ENCODE measurements at regions of chrX and their contacts with region 1.

Region 1: DNA sequence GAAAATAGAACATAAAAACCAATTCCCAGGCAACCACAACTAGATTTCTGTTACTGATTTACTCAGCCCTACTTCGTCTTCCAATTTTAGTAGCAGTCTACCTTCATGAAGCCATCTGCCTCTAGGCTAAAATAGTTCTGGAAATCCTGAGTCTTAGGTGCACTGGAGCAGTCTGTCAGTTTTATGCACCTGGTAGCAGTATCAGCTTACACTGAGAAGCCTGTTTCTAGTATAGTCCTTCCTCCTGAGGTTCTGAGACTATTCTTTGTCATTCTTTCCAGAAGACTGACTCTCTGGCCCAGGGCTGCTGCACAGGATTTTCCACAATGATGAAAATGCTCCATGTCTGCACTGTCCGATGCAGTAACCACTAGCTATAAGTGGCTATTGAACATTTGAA is 16.9 kb upstream of the HPRT1 start:
- DNase-seq: no peak
- ATAC-seq: no peak
- H3K4me3 ChIP-seq: no peak overlapping the region
- H3K4me3 Mint-ChIP-seq: no peak overlapping the region
- H3K27ac ChIP-seq: no peak overlapping the region
- H3K27ac Mint-ChIP-seq: no peak overlapping the region
- H3K4me1 ChIP-seq: no peaks in the 10 kb centered on the region
- H3K4me1 Mint-ChIP-seq: no peaks in the 10 kb centered on the region
- H3K27me3 ChIP-seq: no peaks in the 10 kb centered on the region
- H3K27me3 Mint-ChIP-seq: peaks cover 0 to 3% of the 10 kb centered on the region in 2 donors

Region 2: GRCh38 chrX:134419784-134420183 is 23.2 kb before region 1 on chrX:
- CTCF ChIA-PET with region 1: no interaction called
- POLR2A ChIA-PET with region 1: interaction called in 1 of 2 experiments, 10 read pairs
- DNase-seq: no peak
- ATAC-seq: no peak
- H3K4me3 ChIP-seq: no peak overlapping the region
- H3K4me3 Mint-ChIP-seq: no peak overlapping the region
- H3K27ac ChIP-seq: no peak overlapping the region
- H3K27ac Mint-ChIP-seq: no peak overlapping the region
- H3K4me1 ChIP-seq: no peaks in the 10 kb centered on the region
- H3K4me1 Mint-ChIP-seq: no peaks in the 10 kb centered on the region
- H3K27me3 ChIP-seq: no peaks in the 10 kb centered on the region
- H3K27me3 Mint-ChIP-seq: peaks cover 0 to 4% of the 10 kb centered on the region in 2 donors

Region 3: DNA sequence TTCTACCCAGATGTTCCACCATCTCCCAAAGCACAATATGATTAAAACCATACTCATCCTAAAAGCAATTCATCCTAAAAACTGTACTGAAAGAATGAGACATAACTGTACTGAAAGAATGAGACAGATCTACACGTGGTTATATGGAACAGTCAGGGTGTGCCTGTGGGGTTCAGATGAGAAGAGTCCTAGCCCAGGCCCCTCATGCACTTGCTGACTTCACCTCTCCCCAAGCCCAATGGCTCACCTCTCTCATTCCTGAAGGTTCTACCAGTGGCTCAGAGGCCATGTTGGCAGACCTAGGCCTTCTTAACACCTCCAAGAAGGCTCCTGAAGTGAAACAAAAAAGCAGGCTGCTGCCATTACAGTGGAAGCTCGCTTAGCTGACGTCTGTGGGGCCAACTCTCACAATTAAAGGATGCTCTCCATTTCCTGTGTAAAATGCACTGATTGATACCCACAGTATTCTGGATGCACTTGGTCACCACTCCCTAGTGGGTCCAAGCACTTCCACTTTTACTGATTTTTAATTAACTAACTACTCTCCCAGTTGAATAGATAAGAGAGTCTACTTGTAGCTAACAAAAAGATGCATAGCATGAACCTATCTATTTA is 211.5 kb after region 1 on chrX:
- CTCF ChIA-PET with region 1: no interaction called
- POLR2A ChIA-PET with region 1: no interaction called
- DNase-seq: no peak
- ATAC-seq: no peak
- H3K4me3 ChIP-seq: no peak overlapping the region
- H3K4me3 Mint-ChIP-seq: no peak overlapping the region
- H3K27ac ChIP-seq: no peak overlapping the region
- H3K27ac Mint-ChIP-seq: no peak overlapping the region
- H3K4me1 ChIP-seq: no peaks in the 10 kb centered on the region
- H3K4me1 Mint-ChIP-seq: peaks cover 0 to 2% (median 0%) of the 10 kb centered on the region in 3 donors
- H3K27me3 ChIP-seq: no peaks in the 10 kb centered on the region
- H3K27me3 Mint-ChIP-seq: peaks cover 0 to 19% of the 10 kb centered on the region in 2 donors